Posterior vena cava (tissue), 2 donors: ENCODE measurements at regions of chr5 and their contacts with region 1.

Region 1: GRCh38 chr5:38809388-38810359 is 36.1 kb upstream of the OSMR start:
- DNase-seq: peak; percentile 93

Region 2: GRCh38 chr5:38441453-38442246 is 368.0 kb before region 1 on chr5:
- intact Hi-C with region 1: loop called (anchors 5 kb)
- DNase-seq: peak; percentile 94

Region 3: DNA sequence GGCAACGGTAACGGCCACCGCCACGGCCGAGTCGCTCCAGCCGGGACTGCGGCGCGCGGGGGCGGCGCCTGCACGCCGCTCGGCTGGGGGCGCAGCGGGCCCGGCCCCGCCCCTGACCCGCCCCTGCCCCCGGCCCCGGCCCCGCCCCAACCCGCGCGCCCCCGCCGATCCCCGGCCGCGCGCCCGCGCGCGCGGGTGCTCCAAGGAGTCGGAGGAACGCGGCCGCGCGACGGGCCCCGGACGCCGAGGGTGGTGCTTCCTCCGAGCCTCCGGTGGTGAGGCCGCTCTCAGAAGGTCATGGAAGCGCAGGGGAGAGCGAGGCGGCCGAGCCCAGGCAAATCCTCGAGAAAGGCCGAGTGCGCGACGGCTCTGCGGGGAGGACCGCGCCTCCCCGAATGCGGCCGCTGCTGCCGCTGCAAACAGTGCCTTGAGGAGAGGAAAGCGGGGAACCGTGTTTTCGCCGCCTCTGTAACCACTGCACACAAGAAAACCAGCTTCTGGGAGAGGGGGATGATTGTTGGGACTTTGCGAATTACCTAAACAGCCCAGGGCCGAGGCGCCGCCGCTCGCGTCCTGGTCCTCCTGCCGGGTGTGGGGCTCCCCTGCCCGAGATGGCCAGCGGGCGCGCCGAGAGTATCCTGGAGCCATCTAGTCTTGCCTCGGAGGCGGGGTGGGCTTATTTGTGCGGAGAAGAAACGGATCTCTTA is 252.9 kb before region 1 on chr5 and contains the start of gene LIFR:
- intact Hi-C with region 1: loop called in 1 of 2 experiments (anchors 10 kb)
- DNase-seq: peak; percentile 93
- total RNA-seq, gene LIFR: 75.0 to 80.4 TPM

Region 4: DNA sequence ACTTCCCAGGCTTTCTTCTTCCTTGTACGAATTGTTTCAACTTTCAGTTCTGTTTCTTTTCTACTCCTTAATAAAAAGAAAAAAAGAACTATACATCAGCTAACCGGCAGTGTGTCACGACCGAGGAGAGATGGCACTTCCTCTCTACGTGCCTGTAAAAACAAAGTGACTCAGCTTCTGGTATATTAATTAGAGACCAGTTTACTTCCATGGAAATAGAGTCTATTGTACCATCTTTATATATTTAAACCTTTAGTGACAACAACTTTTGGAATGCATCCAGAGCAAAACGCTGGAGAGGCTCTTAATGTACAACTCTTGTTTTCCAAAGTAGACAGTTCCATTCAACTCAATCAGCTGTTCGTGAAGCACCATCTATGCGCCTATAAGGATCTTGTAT is 158.7 kb before region 1 on chr5:
- intact Hi-C with region 1: loop called in 1 of 2 experiments (anchors 10 kb)
- DNase-seq: no peak

Region 5: DNA sequence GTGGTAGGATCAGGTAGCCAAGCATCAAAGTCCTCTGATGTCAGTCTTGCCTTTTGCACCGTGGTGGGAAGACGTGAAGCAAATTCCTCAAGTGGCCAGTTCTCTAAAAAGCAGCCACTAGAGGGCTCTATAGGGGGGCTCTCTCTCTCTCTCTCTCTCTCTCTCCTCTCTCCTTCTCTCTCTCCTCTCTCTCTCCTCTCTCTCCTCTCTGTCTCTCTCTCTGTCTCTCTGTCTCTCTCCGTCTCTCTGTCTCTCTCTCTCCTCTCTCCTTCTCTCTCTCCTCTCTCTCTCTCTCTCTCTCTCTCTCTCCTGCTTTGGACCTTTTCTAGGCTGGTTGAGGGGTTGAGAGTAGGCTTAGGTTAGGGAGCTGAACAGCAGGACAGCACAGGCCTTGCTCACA is 22.2 kb after region 1 on chr5:
- intact Hi-C with region 1: loop called in 1 of 2 experiments (anchors 1 kb)
- DNase-seq: no peak